ENCODE measurements at regions of chr18 and their contacts with region 1.

Region 1: DNA sequence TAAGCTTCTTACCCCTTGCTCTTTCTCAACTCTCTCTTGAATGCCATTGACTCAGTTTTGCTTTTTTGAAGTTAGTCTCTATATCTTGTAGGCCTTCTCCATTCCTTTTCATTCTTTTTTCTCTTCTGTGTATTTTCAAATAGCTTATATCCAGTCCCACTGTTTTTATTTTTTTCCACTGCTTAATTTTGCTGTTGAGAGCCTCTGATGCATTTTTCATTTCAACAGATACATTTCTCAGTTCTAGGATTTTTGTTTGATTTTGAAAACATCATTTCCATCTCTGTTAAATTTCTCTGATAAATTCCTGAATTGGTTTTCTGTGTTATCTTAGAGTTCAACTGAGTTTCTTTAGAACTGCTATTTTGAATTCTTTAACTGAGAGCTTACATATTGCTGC is 45.9 kb downstream of the MIB1 start:
- DNase-seq: no peak
- H3K4me3 ChIP-seq: no peak overlapping the region
- H3K27ac ChIP-seq: no peak overlapping the region
- H3K4me1 ChIP-seq: no peaks in the 10 kb centered on the region
- H3K27me3 ChIP-seq: no peaks in the 10 kb centered on the region
- CTCF ChIP-seq: no peak

Region 2: GRCh38 chr18:21584391-21584790 is 202.1 kb before region 1 on chr18:
- CTCF ChIA-PET with region 1: no interaction called
- dilution Hi-C with region 1: no loop called
- in situ Hi-C with region 1: no loop called
- intact Hi-C with region 1: no loop called
- DNase-seq: no peak
- H3K4me3 ChIP-seq: no peak overlapping the region
- H3K27ac ChIP-seq: no peak overlapping the region
- H3K4me1 ChIP-seq: no peaks in the 10 kb centered on the region
- H3K27me3 ChIP-seq: no peaks in the 10 kb centered on the region
- CTCF ChIP-seq: no peak

Region 3: DNA sequence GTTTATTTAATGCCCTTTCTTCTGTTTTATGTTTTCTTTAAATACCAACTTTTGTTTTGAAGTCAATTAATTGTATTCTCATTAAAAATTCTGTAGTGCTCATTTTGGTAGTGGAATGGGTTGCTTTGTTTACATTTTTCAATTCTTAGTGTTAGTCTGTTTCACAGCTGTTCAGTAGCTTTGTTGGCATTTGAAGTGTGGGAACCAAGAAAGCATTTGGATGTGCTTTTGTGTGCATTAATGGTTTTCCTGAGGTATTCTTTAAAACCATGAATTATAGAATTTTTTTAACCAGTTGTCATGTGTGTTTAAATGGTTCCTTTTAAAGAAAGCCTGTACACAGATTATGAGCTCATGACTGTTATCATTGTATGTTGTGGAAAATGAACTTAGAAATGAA is 26.2 kb before region 1 on chr18:
- CTCF ChIA-PET with region 1: no interaction called
- dilution Hi-C with region 1: no loop called
- in situ Hi-C with region 1: no loop called
- intact Hi-C with region 1: loop called (anchors 1 kb)
- DNase-seq: no peak
- H3K4me3 ChIP-seq: no peak overlapping the region
- H3K27ac ChIP-seq: no peak overlapping the region
- H3K4me1 ChIP-seq: peaks cover 2% of the 10 kb centered on the region
- H3K27me3 ChIP-seq: no peaks in the 10 kb centered on the region
- CTCF ChIP-seq: no peak